Endothelial cell of umbilical vein (primary cell): ENCODE measurements at regions of chr1 and their contacts with region 1.

Region 1: DNA sequence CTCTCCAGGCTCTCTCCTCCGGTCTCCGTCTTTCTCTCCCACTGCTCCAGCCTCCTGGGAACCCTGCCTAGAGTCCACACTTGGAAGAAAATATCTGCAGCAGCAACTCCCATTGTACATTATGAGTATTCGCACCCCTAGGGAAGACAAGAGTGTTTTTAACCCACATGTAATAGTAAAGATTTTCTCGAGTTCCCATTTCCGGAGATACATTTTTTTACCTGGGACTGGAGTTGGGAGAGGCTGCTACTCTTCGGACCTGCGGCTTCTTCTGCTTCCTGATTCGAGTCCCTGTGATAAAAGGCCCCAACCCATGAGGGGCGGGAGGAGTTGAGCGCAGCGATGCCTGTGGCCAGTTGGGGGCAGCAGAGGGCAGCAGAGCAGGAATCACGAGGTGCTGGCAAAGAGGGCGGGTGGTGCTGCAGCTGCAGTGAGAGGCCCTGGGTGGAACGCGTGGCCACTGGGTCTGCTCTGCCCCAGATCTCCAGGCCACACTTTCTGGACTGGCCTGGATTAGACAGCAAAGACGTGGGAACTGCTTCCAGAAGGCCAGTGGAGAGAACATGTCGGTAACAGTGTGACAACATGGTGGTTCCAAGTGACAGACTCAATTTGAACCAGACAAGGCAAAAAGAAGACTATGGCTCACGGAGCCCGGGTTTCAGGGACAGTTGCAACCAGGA is 221.0 kb upstream of the CSF3R start:
- DNase-seq: peak; percentile 73
- H3K4me3 ChIP-seq: no peak overlapping the region
- H3K27ac ChIP-seq: no peak overlapping the region
- H3K4me1 ChIP-seq: no peaks in the 10 kb centered on the region
- H3K27me3 ChIP-seq: no peaks in the 10 kb centered on the region
- CTCF ChIP-seq: peak; percentile 92 to 98
- POLR2A ChIP-seq: no peak

Region 2: GRCh38 chr1:36359911-36360550 is 343.6 kb before region 1 on chr1:
- CTCF ChIA-PET with region 1: no interaction called
- POLR2A ChIA-PET with region 1: no interaction called
- dilution Hi-C with region 1: no loop called
- intact Hi-C with region 1: no loop called
- DNase-seq: no peak
- H3K4me3 ChIP-seq: no peak overlapping the region
- H3K27ac ChIP-seq: no peak overlapping the region
- H3K4me1 ChIP-seq: no peaks in the 10 kb centered on the region
- H3K27me3 ChIP-seq: no peaks in the 10 kb centered on the region
- CTCF ChIP-seq: no peak
- POLR2A ChIP-seq: no peak

Region 3: DNA sequence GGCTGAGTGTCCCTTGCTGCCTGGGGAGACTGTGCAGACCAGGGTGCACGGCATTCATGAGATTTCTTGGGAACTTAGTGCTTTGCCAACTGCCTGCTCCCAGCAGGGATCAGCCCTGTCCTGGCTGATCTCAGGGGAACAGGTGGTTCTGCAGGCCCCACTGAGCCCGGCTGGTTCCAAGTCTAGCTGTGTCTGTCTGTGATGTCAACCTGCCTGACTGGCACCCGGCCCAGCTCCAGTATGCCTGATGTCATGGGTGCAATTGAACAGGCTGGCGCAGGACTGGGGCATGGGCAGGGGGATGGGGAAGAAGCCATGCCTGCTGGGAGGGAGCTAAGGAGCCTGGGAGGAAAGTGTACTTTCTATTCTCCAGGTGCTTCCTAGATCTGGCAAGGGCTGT is 103.6 kb after region 1 on chr1:
- CTCF ChIA-PET with region 1: no interaction called
- POLR2A ChIA-PET with region 1: no interaction called
- dilution Hi-C with region 1: no loop called
- intact Hi-C with region 1: loop called (anchors 5 kb)
- DNase-seq: no peak
- H3K4me3 ChIP-seq: no peak overlapping the region
- H3K27ac ChIP-seq: no peak overlapping the region
- H3K4me1 ChIP-seq: peaks cover 9% of the 10 kb centered on the region
- H3K27me3 ChIP-seq: peaks cover 0 to 6% of the 10 kb centered on the region in 2 experiments
- CTCF ChIP-seq: no peak
- POLR2A ChIP-seq: no peak

Region 4: DNA sequence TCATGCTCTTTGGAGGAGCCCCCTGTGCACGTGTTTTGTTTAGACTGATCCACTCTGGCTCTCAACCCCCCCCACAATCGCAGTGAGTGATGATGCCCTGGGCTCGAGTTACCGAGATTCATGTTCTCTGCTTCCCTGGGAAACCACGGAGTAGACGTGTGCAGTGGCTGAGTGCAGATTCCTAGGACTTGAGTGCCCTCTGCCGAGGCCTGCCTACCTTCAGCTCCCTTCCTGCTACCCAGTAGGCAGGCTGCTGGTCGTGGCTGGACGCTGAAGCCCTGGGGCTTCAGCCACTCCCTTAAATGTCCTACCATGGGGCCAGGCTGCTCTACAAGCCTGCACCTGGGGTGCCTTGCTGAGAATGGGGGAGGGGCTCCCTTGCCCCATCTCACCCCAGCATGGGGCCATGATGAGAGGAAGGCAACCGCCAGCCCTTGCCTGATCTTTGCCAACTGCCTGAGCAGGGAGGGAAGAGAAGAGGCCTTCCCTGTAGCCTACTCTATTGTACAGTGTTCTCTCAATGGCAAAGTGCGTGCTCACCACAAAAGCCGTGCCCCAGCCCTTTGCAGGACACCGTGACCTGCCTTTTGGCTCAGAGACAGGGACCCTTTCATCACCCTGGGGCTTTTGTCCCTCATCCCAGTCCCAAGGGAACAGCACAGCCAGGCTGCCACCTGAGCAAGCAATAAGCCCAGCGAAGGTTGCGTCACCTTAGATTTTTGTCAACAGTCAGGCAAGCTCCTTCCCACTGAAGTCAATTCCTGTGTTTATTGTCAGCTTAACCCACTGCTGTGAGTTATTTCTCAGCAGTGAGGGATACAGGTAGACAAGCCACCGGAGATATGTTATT is 334.8 kb after region 1 on chr1:
- CTCF ChIA-PET with region 1: interaction called, 3 read pairs
- POLR2A ChIA-PET with region 1: no interaction called
- dilution Hi-C with region 1: no loop called
- intact Hi-C with region 1: loop called (anchors 5 kb)
- DNase-seq: no peak
- H3K4me3 ChIP-seq: no peak overlapping the region
- H3K27ac ChIP-seq: no peak overlapping the region
- H3K4me1 ChIP-seq: no peaks in the 10 kb centered on the region
- H3K27me3 ChIP-seq: peaks cover 37 to 40% of the 10 kb centered on the region in 2 experiments
- CTCF ChIP-seq: no peak
- POLR2A ChIP-seq: no peak

Region 5: GRCh38 chr1:37177247-37177864 is 473.7 kb after region 1 on chr1:
- CTCF ChIA-PET with region 1: no interaction called
- POLR2A ChIA-PET with region 1: no interaction called
- dilution Hi-C with region 1: no loop called
- intact Hi-C with region 1: loop called (anchors 1 kb)
- DNase-seq: peak; percentile 21
- H3K4me3 ChIP-seq: no peak overlapping the region
- H3K27ac ChIP-seq: no peak overlapping the region
- H3K4me1 ChIP-seq: no peaks in the 10 kb centered on the region
- H3K27me3 ChIP-seq: no peaks in the 10 kb centered on the region
- CTCF ChIP-seq: peak; percentile 27 to 35
- POLR2A ChIP-seq: no peak

Region 6: DNA sequence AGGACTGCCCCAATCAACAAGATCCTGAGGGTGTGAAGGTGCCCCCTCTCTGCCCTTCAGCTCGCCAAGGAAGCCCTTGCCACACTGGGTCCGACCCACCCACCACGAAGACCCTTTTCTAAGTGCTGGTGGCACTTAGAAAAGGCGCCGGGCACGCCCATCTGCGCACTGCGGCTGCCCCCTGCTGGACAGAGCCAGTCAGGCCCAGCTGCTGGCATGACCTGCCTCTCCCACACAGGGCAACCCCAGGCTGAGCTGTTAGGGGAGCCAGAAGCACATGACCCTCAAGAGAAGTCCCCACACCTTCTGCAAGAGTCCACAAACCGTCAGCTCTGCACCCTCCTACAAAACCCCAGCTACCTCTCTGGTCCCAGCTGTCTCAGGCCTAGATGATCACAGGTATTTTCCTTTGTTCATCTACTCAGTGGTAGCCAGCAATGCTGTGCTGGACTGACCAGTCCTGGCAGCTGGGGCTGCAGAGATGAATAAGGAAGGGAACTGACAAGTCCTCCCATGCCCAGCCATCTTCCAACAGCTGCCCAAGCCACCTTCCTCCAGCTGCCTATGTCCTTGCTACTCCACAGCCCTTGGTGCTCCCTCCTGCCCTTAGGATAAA is 730.7 kb after region 1 on chr1:
- CTCF ChIA-PET with region 1: interaction called, 14 read pairs
- POLR2A ChIA-PET with region 1: no interaction called
- dilution Hi-C with region 1: no loop called
- intact Hi-C with region 1: loop called (anchors 1 kb)
- DNase-seq: peak; percentile 48
- H3K4me3 ChIP-seq: no peak overlapping the region
- H3K27ac ChIP-seq: no peak overlapping the region
- H3K4me1 ChIP-seq: no peaks in the 10 kb centered on the region
- H3K27me3 ChIP-seq: no peaks in the 10 kb centered on the region
- CTCF ChIP-seq: peak; percentile 93 to 99
- POLR2A ChIP-seq: no peak